Activated naive CD4-positive, alpha-beta T cell treated with anti-CD3 and anti-CD28 coated beads for 36 hours (primary cell): ENCODE measurements at regions of chr7 and their contacts with region 1.

Region 1: DNA sequence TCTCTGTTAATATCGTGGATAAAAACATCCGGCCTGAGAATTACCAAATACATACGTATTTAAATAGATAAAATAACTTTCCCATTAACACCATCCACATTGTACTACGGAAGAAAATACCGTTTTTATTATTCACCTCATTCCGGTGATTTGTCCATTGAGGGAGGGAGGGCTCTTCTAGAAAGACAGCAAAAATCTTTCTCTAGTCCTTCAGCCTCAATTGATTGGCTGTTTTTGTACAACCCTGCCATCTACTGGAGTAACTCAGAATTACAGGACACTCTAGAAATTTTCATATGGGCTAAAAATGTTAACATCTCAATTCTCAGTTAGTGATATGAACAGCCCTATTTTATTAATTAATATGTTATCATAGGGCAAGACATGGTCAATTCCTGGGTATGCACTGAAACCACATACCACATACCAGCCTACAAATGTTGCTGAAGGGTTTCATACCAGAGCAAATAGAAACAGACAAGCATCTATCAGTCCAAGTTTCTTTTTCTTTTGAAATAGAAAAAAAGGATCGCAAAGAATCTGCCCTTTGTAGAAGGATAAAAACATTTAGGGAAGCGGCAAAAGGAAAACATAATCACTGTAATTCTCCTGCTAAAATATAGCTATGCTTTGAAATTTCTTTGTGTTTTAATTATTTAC is 55.8 kb upstream of the CDCA7L start:
- DNase-seq: peak; percentile 24
- H3K4me3 Mint-ChIP-seq: no peak overlapping the region
- H3K27ac Mint-ChIP-seq: no peak overlapping the region
- H3K4me1 Mint-ChIP-seq: peaks cover 3% of the 10 kb centered on the region
- H3K27me3 Mint-ChIP-seq: no peaks in the 10 kb centered on the region

Region 2: DNA sequence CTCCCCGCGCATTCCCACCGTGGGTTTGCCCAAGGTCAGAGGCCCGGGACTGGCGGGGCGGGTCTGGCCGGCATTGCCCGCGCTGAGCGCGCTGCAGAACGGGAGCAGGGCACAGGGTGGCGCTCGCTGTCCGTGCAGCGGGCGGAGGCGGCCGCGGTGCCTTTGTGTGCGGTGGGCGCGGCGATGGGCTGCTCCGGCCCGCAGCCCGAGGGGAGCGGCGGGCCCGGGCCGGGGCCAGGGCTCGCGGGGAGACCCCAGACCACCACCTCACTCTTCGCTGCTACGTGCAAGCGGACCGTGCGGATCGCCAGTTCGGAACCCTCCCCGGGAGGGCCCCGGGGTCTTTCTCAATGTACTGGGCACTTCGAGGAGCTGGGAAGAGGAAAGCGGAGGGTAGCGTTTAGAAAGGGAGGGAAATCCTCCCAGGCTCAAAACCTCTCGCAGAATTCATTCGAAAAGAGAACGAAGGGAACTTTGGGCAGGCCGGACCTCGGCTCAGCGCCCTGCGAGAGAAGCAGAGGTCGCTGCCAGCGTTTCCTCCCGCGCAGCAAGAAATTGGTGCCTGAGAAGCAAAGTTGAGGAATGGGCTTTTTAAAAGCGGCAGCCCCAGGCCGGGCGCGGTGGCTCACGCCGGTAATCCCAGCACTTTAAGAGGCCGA is 1223.3 kb before region 1 on chr7:
- CTCF ChIA-PET with region 1: no interaction called
- intact Hi-C with region 1: loop called (anchors 5 kb)
- DNase-seq: peak; percentile 14
- H3K4me3 Mint-ChIP-seq: no peak overlapping the region
- H3K27ac Mint-ChIP-seq: no peak overlapping the region
- H3K4me1 Mint-ChIP-seq: peaks cover 20% of the 10 kb centered on the region
- H3K27me3 Mint-ChIP-seq: peaks cover 75% of the 10 kb centered on the region

Region 3: GRCh38 chr7:21526007-21526406 is 475.5 kb before region 1 on chr7:
- CTCF ChIA-PET with region 1: no interaction called
- intact Hi-C with region 1: loop called (anchors 10 kb)
- DNase-seq: no peak
- H3K4me3 Mint-ChIP-seq: no peak overlapping the region
- H3K27ac Mint-ChIP-seq: no peak overlapping the region
- H3K4me1 Mint-ChIP-seq: no peaks in the 10 kb centered on the region
- H3K27me3 Mint-ChIP-seq: no peaks in the 10 kb centered on the region

Region 4: GRCh38 chr7:21568762-21569161 is 432.7 kb before region 1 on chr7:
- CTCF ChIA-PET with region 1: no interaction called
- intact Hi-C with region 1: loop called (anchors 5 kb)
- DNase-seq: no peak
- H3K4me3 Mint-ChIP-seq: no peak overlapping the region
- H3K27ac Mint-ChIP-seq: no peak overlapping the region
- H3K4me1 Mint-ChIP-seq: no peaks in the 10 kb centered on the region
- H3K27me3 Mint-ChIP-seq: no peaks in the 10 kb centered on the region

Region 5: GRCh38 chr7:21651697-21652096 is 349.8 kb before region 1 on chr7:
- CTCF ChIA-PET with region 1: no interaction called
- intact Hi-C with region 1: no loop called
- DNase-seq: no peak
- H3K4me3 Mint-ChIP-seq: no peak overlapping the region
- H3K27ac Mint-ChIP-seq: no peak overlapping the region
- H3K4me1 Mint-ChIP-seq: no peaks in the 10 kb centered on the region
- H3K27me3 Mint-ChIP-seq: no peaks in the 10 kb centered on the region

Region 6: GRCh38 chr7:22066484-22066883 is 65.0 kb after region 1 on chr7:
- CTCF ChIA-PET with region 1: no interaction called
- intact Hi-C with region 1: no loop called
- DNase-seq: no peak
- H3K4me3 Mint-ChIP-seq: no peak overlapping the region
- H3K27ac Mint-ChIP-seq: no peak overlapping the region
- H3K4me1 Mint-ChIP-seq: no peaks in the 10 kb centered on the region
- H3K27me3 Mint-ChIP-seq: peaks cover 2% of the 10 kb centered on the region

Region 7: GRCh38 chr7:22295402-22296264 is 294.2 kb after region 1 on chr7:
- CTCF ChIA-PET with region 1: no interaction called
- intact Hi-C with region 1: no loop called
- DNase-seq: no peak
- H3K4me3 Mint-ChIP-seq: no peak overlapping the region
- H3K27ac Mint-ChIP-seq: no peak overlapping the region
- H3K4me1 Mint-ChIP-seq: no peaks in the 10 kb centered on the region
- H3K27me3 Mint-ChIP-seq: peaks cover 1% of the 10 kb centered on the region